IMR-90 (cell line): ENCODE measurements at regions of chr9 and their contacts with region 1.

Region 1: DNA sequence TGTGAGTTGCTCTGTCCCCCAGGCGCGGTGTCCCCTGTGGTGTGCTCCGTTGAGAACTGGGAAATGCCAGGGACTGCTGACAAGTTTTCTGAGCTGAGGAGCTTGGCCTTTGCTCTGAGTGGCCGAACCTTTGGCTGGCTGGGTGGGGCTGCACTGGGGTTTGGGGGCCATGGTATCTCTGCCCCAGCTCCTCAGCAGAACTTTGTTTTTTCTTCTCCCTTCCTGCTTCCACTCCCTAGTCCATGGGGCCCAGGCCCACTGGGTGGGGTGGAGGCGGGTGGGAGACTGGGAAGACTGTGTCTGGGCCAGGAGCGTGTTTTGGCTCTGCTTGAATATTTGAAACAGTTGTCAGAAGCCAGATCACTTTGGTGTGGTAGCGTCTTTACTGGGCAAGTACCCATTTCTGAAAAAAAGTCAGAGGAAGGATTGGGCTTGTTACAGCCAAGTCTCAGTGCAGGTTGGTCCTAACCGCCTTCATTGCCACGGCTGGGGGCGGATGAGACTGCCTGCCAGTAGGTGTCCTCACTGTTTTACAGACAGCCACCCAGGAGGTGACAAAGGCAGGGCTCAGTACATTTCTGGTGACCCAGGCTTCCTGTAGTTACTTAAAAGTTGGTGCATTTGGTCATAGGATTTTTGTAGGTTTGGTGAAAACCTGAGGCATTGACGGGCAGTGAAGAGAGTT is 92.7 kb downstream of the DAB2IP start:
- DNase-seq: peak; percentile 43
- ATAC-seq: peak; percentile 22
- H3K4me3 ChIP-seq: peak overlapping the region; percentile 43
- H3K27ac ChIP-seq: peak overlapping the region; percentile 71
- H3K4me1 ChIP-seq: peaks cover 35% of the 10 kb centered on the region
- H3K27me3 ChIP-seq: no peaks in the 10 kb centered on the region
- CTCF ChIP-seq: peak; percentile 46
- POLR2A ChIP-seq: no peak
- RAD21 ChIP-seq: peak; percentile 56

Region 2: GRCh38 chr9:121201738-121202533 is 542.2 kb before region 1 on chr9 and contains the start of gene RAB14:
- CTCF ChIA-PET with region 1: no interaction called
- POLR2A ChIA-PET with region 1: no interaction called
- dilution Hi-C with region 1: no loop called
- in situ Hi-C with region 1: no loop called
- intact Hi-C with region 1: no loop called
- DNase-seq: peak; percentile 97
- ATAC-seq: peak; percentile 94
- H3K4me3 ChIP-seq: peak within 1 kb of the TSS; percentile 77
- H3K27ac ChIP-seq: peak within 1 kb of the TSS; percentile 90
- H3K4me1 ChIP-seq: peaks cover 7% of the 10 kb centered on the region
- H3K27me3 ChIP-seq: no peaks in the 10 kb centered on the region
- CTCF ChIP-seq: peak; percentile 53
- POLR2A ChIP-seq: peak; percentile 77
- RAD21 ChIP-seq: no peak
- total RNA-seq, gene RAB14: 20.1 and 36.1 TPM in 2 replicates

Region 3: GRCh38 chr9:121631978-121632418 is 112.1 kb before region 1 on chr9:
- CTCF ChIA-PET with region 1: no interaction called
- POLR2A ChIA-PET with region 1: interaction called, 12 read pairs
- dilution Hi-C with region 1: no loop called
- in situ Hi-C with region 1: no loop called
- intact Hi-C with region 1: no loop called
- DNase-seq: no peak
- ATAC-seq: no peak
- H3K4me3 ChIP-seq: no peak overlapping the region
- H3K27ac ChIP-seq: no peak overlapping the region
- H3K4me1 ChIP-seq: peaks cover 4% of the 10 kb centered on the region; the same call in 1 of the 2 replicates
- H3K27me3 ChIP-seq: no peaks in the 10 kb centered on the region
- CTCF ChIP-seq: no peak
- POLR2A ChIP-seq: no peak
- RAD21 ChIP-seq: no peak